Activated T-helper 1 cell treated with anti-CD3 and anti-CD28 coated beads, Interleukin-12 subunit alpha, Interleukin-12 subunit beta, Interleukin-2, Interleukin-4 antibody, amounts not matched to agents 30 ng/mL and 10 ng/mL and 1 ng/mL, durations not matched to agents 14 hours and 24 hours and 36 hours (primary cell): ENCODE measurements at regions of chr1 and their contacts with region 1.

Region 1: GRCh38 chr1:192808518-192809306 is at the start of gene RGS2:
- DNase-seq: peak; percentile 84
- H3K4me3 Mint-ChIP-seq: peak within 1 kb of the TSS; percentile 93
- H3K27ac Mint-ChIP-seq: peak within 1 kb of the TSS; percentile 91
- H3K4me1 Mint-ChIP-seq: peaks cover 43% of the 10 kb centered on the region
- H3K27me3 Mint-ChIP-seq: peaks cover under 1% of the 10 kb centered on the region
- total RNA-seq, gene RGS2: 11.3 and 12.1 TPM in 2 replicates

Region 2: DNA sequence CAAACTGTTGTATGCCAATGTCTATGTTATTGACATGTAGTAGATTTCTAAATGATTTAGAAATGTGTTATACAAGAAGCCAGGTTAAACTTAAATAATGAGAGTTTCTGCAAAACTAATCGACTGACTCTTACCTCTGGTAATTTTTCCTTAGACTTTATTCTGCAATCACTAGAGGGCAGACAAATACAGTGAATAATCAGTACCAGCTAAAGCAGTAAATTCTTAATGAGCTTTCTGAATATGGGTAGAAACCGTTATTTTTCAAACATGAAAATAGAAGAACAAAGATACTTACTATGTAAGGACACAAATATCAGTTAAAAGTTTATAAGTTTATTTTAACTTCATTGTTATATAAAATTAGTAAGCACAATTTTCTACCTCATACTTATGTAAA is 331.1 kb before region 1 on chr1:
- intact Hi-C with region 1: loop called (anchors 2 kb)
- DNase-seq: no peak
- H3K4me3 Mint-ChIP-seq: no peak overlapping the region
- H3K27ac Mint-ChIP-seq: no peak overlapping the region
- H3K4me1 Mint-ChIP-seq: no peaks in the 10 kb centered on the region
- H3K27me3 Mint-ChIP-seq: peaks cover 12% of the 10 kb centered on the region

Region 3: DNA sequence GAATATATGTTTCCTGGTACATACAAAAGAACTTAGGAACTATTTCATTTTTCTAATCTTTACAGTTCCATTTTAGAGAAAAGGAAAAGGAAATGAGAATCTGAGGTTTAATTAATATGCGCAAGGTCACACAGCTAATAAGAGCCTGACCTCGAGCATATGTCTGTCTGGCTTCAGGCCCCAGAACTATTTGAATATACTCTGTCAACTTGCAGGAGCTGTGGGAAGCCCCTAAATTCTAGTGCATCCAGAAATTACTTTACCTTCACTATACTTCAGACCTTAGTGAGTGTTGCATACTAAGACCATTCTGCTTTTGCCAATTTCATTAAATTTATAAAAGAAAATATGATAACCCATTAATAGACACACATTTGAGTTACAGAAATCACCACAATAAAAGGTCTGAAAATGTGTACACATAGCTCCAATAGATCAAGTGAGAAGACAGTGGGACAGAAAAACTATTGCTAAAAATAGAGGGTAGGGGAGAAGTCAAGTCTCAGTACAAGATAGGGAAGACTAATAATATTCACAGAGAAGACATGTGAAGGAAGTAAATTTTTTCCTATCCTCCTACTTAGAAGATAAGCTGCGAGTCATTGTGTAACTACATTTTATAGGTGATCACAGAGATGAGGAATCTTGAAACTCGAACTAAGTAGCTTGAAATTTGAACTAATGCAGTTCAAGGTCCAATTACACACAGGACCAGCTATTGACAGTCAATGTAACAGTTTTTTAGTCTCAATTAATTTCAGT is 168.9 kb before region 1 on chr1:
- intact Hi-C with region 1: loop called (anchors 5 kb)
- DNase-seq: no peak
- H3K4me3 Mint-ChIP-seq: no peak overlapping the region
- H3K27ac Mint-ChIP-seq: peak overlapping the region; percentile 8
- H3K4me1 Mint-ChIP-seq: peaks cover 6% of the 10 kb centered on the region
- H3K27me3 Mint-ChIP-seq: peaks cover 2% of the 10 kb centered on the region

Region 4: DNA sequence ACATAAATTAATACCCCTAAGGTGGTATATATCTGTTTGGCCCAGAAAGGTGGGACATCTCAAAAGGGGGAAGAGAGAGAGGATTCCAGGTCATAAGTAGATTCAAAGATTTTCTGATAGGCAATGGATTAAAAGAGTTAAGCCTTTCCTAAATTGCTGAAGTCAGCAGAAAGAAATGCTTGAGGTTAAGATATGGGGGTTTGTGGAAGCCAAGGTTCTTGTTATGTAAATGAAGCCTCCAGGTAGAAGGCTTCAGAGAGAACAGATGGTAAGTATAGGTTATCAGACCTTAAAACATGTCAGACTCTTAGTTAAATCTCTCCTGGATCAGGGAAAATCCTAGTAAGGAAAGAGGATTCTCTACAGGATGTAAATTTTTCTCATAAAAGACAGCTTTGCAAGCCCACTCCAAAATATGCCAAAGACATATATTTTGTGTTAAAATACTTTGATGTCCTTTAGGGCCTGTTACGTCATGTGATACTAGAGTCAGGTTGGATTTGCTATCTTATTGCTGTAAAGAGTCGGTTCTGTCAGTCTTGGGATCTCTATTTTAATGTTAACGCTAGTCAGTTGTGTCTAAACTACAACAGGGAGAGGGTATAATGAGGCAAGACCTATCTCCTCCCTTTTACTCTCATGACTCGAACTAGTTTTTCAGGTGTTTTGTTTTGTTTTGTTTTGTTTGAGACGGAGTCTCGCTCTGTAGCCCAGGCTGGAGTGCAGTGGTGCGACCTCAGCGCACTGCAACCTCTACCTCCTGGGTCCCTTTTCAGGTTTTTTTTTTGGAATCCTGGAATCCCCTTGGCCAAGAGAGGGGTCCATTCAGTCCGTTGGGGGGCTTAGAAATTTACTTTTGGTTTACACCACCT is 30.7 kb after region 1 on chr1:
- intact Hi-C with region 1: no loop called
- DNase-seq: no peak
- H3K4me3 Mint-ChIP-seq: no peak overlapping the region
- H3K27ac Mint-ChIP-seq: no peak overlapping the region
- H3K4me1 Mint-ChIP-seq: no peaks in the 10 kb centered on the region
- H3K27me3 Mint-ChIP-seq: peaks cover 9% of the 10 kb centered on the region

Region 5: GRCh38 chr1:192983349-192983980 is 174.8 kb after region 1 on chr1:
- intact Hi-C with region 1: loop called (anchors 1 kb)
- DNase-seq: no peak
- H3K4me3 Mint-ChIP-seq: peak overlapping the region; percentile 41
- H3K27ac Mint-ChIP-seq: peak overlapping the region; percentile 88
- H3K4me1 Mint-ChIP-seq: peaks cover 56% of the 10 kb centered on the region
- H3K27me3 Mint-ChIP-seq: no peaks in the 10 kb centered on the region

Region 6: GRCh38 chr1:193104906-193105820 is 296.5 kb after region 1 on chr1 and contains the start of gene GLRX2:
- intact Hi-C with region 1: loop called (anchors 1 kb)
- DNase-seq: peak; percentile 42
- H3K4me3 Mint-ChIP-seq: peak within 1 kb of the TSS; percentile 92
- H3K27ac Mint-ChIP-seq: peak within 1 kb of the TSS; percentile 77
- H3K4me1 Mint-ChIP-seq: peaks cover 24% of the 10 kb centered on the region
- H3K27me3 Mint-ChIP-seq: peaks cover 14% of the 10 kb centered on the region
- total RNA-seq, gene GLRX2: 29.6 and 32.9 TPM in 2 replicates

Region 7: GRCh38 chr1:193456811-193457280 is 648.1 kb after region 1 on chr1:
- intact Hi-C with region 1: loop called (anchors 5 kb)
- DNase-seq: no peak
- H3K4me3 Mint-ChIP-seq: no peak overlapping the region
- H3K27ac Mint-ChIP-seq: no peak overlapping the region
- H3K4me1 Mint-ChIP-seq: peaks cover 25% of the 10 kb centered on the region
- H3K27me3 Mint-ChIP-seq: no peaks in the 10 kb centered on the region